ENCODE measurements at regions of chr18 and their contacts with region 1.

Region 1: GRCh38 chr18:13629841-13630715 is 96.3 kb downstream of the FAM210A start:
- DNase-seq: peak; percentile 50
- ATAC-seq: peak; percentile 98
- H3K4me3 ChIP-seq: no peak overlapping the region
- H3K27ac ChIP-seq: no peak overlapping the region
- H3K4me1 ChIP-seq: no peaks in the 10 kb centered on the region
- H3K27me3 ChIP-seq: peaks cover 3% of the 10 kb centered on the region
- CTCF ChIP-seq: peak; percentile 72
- POLR2A ChIP-seq: no peak
- RAD21 ChIP-seq: peak; percentile 82

Region 2: DNA sequence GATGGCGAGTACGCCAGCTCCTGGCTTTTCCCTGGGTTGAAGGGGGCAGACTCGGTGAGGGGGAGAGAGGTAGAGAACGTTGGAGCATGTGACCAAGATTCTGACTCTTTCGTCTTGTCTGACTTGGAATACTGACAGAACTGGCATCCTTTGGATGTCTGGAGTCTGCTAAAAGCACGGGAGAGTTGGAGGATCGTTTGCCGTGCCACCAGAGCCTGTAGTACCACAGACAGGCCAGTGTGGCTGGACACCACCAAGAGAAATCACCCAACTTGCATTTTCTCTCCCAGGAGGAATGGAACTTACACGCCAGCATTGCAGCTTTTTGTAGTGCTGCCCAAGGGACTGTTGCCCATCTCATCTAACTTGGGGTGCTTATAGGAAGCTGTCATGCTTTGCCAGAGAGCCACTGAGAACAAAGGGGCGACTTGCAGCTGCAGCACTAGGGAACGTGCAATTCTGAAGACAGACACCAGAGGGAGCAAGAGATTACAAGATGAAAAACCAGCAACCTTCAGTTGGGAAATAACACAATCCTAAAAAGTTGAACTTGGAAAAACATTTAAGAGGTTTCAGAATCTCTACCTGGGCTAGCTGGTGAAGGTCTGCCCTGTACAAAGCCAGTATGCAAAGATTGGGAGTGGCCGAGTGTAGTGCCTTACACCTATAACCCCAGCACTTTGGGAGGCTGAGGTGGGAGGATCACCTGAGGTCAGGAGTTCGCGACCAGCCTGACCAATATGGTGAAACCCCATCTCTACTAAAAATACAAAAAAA is 903.1 kb before region 1 on chr18:
- CTCF ChIA-PET with region 1: no interaction called
- POLR2A ChIA-PET with region 1: no interaction called
- dilution Hi-C with region 1: no loop called
- in situ Hi-C with region 1: no loop called
- intact Hi-C with region 1: loop called (anchors 5 kb)
- DNase-seq: peak; percentile 74
- ATAC-seq: peak; percentile 80
- H3K4me3 ChIP-seq: no peak overlapping the region
- H3K27ac ChIP-seq: no peak overlapping the region
- H3K4me1 ChIP-seq: no peaks in the 10 kb centered on the region; the same call in 1 of the 2 replicates
- H3K27me3 ChIP-seq: no peaks in the 10 kb centered on the region
- CTCF ChIP-seq: peak; percentile 89
- POLR2A ChIP-seq: no peak
- RAD21 ChIP-seq: peak; percentile 92

Region 3: GRCh38 chr18:12750076-12750714 is 879.9 kb before region 1 on chr18:
- CTCF ChIA-PET with region 1: no interaction called
- POLR2A ChIA-PET with region 1: no interaction called
- dilution Hi-C with region 1: no loop called
- in situ Hi-C with region 1: loop called (anchors 25 kb)
- intact Hi-C with region 1: no loop called
- DNase-seq: no peak
- ATAC-seq: no peak
- H3K4me3 ChIP-seq: no peak overlapping the region
- H3K27ac ChIP-seq: no peak overlapping the region
- H3K4me1 ChIP-seq: peaks cover 7% of the 10 kb centered on the region
- H3K27me3 ChIP-seq: no peaks in the 10 kb centered on the region
- CTCF ChIP-seq: no peak
- POLR2A ChIP-seq: no peak
- RAD21 ChIP-seq: no peak

Region 4: DNA sequence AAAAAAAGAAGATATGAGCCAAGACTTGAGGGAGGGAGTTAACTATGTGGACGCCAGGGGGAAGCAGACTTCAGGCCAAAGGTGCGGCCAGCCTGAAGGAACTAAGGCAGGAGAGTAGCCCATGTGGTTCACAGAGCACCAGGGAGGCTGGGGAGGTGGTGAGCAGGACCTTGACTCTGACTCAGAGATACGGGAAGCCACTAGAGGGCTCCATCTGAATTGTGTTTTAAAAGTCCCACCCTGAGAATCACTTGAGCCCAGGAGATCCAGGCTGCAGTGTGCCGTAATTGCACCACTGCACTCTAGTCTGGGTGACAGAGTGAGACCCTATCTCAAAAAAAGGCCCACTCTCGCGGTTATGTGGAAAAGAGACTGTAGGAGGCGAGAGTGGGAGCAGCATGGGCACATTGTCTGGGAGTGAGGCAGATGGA is 626.6 kb before region 1 on chr18:
- CTCF ChIA-PET with region 1: no interaction called
- POLR2A ChIA-PET with region 1: no interaction called
- dilution Hi-C with region 1: no loop called
- in situ Hi-C with region 1: loop called (anchors 25 kb)
- intact Hi-C with region 1: loop called (anchors 2 kb)
- DNase-seq: peak; percentile 80
- ATAC-seq: peak; percentile 98
- H3K4me3 ChIP-seq: no peak overlapping the region
- H3K27ac ChIP-seq: no peak overlapping the region
- H3K4me1 ChIP-seq: no peaks in the 10 kb centered on the region
- H3K27me3 ChIP-seq: no peaks in the 10 kb centered on the region
- CTCF ChIP-seq: peak; percentile 55
- POLR2A ChIP-seq: no peak
- RAD21 ChIP-seq: peak; percentile 47

Region 5: DNA sequence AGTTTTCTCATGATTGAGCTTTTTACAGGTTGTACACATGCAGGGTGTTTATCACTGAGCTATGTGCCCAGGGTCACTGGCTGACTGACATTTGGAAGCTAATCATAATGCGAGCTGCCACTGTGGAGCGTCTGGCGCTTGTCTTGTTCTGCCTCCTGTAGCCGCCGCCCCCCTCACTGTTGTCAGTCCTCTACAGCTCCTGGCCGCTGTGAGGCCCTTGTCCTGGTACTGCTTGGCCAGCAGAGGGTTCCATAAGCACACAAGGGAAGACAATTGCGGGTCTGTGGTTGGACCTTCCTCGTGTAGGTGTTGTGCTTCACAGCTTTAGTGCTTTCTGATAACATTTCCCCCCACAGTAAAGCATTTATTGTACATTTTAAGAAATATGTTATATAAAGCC is 517.1 kb before region 1 on chr18:
- CTCF ChIA-PET with region 1: no interaction called
- POLR2A ChIA-PET with region 1: no interaction called
- dilution Hi-C with region 1: no loop called
- in situ Hi-C with region 1: no loop called
- intact Hi-C with region 1: loop called (anchors 2 kb)
- DNase-seq: peak; percentile 51
- ATAC-seq: peak; percentile 96
- H3K4me3 ChIP-seq: no peak overlapping the region
- H3K27ac ChIP-seq: no peak overlapping the region
- H3K4me1 ChIP-seq: no peaks in the 10 kb centered on the region
- H3K27me3 ChIP-seq: no peaks in the 10 kb centered on the region
- CTCF ChIP-seq: peak; percentile 46
- POLR2A ChIP-seq: no peak
- RAD21 ChIP-seq: peak; percentile 45

Region 6: DNA sequence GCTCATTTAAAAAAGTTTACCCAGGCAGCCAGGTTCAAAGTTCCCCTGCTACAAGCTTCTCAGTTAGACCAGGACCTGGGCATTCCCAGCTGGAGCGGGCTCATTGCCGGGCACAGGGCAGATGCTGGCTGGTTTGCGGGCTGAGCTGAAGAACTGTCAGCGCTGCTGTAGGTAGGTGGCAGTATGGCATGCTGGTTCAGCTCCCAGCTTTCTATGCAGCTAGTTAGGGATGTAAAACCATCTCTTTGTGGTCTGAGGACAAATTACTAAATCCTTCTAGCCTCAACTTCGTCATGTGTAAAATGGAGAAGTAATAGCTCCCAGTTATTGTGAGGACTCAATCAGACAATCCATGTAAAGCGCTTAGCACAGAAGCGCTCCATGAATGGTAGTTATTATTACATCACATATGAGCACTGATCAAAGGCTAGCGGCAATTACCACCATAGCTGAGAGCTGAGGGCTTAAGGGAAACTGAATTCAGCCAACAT is 413.9 kb before region 1 on chr18:
- CTCF ChIA-PET with region 1: interaction called, 4 read pairs
- POLR2A ChIA-PET with region 1: no interaction called
- dilution Hi-C with region 1: no loop called
- in situ Hi-C with region 1: no loop called
- intact Hi-C with region 1: loop called (anchors 2 kb)
- DNase-seq: peak; percentile 47
- ATAC-seq: peak; percentile 74
- H3K4me3 ChIP-seq: no peak overlapping the region
- H3K27ac ChIP-seq: no peak overlapping the region
- H3K4me1 ChIP-seq: no peaks in the 10 kb centered on the region; the same call in 1 of the 2 replicates
- H3K27me3 ChIP-seq: peaks cover 67% of the 10 kb centered on the region
- CTCF ChIP-seq: peak; percentile 45; the same call in 1 of the 2 replicates
- POLR2A ChIP-seq: no peak
- RAD21 ChIP-seq: peak; percentile 54

Region 7: DNA sequence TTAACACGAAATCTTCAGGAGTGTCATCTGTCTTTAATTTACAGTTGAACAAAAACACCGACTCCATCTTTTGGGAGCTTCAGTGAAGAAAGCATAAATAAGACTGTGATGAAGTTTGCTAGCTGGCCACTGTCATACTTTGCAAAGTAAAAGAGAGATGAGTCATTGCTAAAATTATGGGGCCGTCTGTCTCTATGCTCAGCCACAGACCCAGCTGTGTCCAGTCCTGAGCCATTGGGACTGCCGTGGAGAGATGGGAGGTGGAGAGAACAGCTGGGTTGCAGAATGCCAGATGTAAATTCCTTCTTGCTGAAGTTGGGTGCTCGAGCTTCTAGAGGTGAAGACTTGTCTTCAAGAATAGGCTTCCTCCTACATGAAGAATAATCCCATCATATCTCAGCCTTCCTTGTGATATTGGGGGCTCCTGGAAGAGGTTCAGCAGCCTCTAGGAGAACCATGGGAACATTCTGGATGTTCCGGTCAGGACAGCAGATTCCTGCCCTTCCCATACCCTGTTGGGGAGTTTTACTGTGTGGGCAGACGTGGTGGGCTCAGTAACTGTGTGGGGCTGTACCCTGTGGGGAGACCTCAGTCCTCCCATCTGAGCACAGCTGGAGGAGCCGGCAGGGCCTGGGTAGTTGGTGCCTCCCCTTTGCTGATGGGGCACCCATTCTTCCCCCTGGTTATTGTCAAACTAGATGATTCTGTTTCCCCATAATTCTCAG is 340.4 kb before region 1 on chr18:
- CTCF ChIA-PET with region 1: no interaction called
- POLR2A ChIA-PET with region 1: no interaction called
- dilution Hi-C with region 1: no loop called
- in situ Hi-C with region 1: no loop called
- intact Hi-C with region 1: no loop called
- DNase-seq: no peak
- ATAC-seq: no peak
- H3K4me3 ChIP-seq: no peak overlapping the region
- H3K27ac ChIP-seq: no peak overlapping the region
- H3K4me1 ChIP-seq: no peaks in the 10 kb centered on the region
- H3K27me3 ChIP-seq: no peaks in the 10 kb centered on the region; the same call in 1 of the 2 replicates
- CTCF ChIP-seq: no peak
- POLR2A ChIP-seq: no peak
- RAD21 ChIP-seq: no peak

Region 8: GRCh38 chr18:13530033-13530878 is 99.8 kb before region 1 on chr18:
- CTCF ChIA-PET with region 1: no interaction called
- POLR2A ChIA-PET with region 1: no interaction called
- dilution Hi-C with region 1: no loop called
- in situ Hi-C with region 1: no loop called
- intact Hi-C with region 1: no loop called
- DNase-seq: no peak
- ATAC-seq: no peak
- H3K4me3 ChIP-seq: no peak overlapping the region
- H3K27ac ChIP-seq: no peak overlapping the region
- H3K4me1 ChIP-seq: no peaks in the 10 kb centered on the region
- H3K27me3 ChIP-seq: peaks cover 5% of the 10 kb centered on the region; the same call in 1 of the 2 replicates
- CTCF ChIP-seq: no peak
- POLR2A ChIP-seq: no peak
- RAD21 ChIP-seq: no peak

Region 9: DNA sequence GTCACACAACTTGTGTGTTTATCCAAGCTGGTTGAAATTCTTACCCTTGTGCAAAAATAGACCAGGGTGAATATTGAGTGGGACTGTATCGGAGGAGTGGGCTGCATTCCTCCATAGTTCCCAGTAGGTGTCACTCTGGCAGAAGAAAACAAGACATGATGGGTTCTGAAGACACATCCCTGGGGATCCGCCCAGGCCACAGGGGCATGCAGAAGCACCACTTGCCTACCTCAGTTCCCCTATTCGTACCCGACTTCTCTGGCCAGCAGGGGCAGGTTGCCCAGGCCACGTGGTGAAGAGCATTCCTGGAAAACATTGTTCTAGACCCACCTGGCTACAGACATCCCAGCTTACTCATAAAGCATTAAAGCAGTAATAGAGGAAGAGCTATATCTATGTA is 72.0 kb before region 1 on chr18:
- CTCF ChIA-PET with region 1: no interaction called
- POLR2A ChIA-PET with region 1: no interaction called
- dilution Hi-C with region 1: no loop called
- in situ Hi-C with region 1: no loop called
- intact Hi-C with region 1: loop called (anchors 1 kb)
- DNase-seq: peak; percentile 11
- ATAC-seq: peak; percentile 82
- H3K4me3 ChIP-seq: no peak overlapping the region
- H3K27ac ChIP-seq: no peak overlapping the region
- H3K4me1 ChIP-seq: no peaks in the 10 kb centered on the region
- H3K27me3 ChIP-seq: peaks cover 6% of the 10 kb centered on the region; the same call in 1 of the 2 replicates
- CTCF ChIP-seq: peak; percentile 41
- POLR2A ChIP-seq: no peak
- RAD21 ChIP-seq: peak; percentile 44

Measured in IMR-90 (cell line).